ENCODE measurements at regions of chr7 and their contacts with region 1.

Region 1: DNA sequence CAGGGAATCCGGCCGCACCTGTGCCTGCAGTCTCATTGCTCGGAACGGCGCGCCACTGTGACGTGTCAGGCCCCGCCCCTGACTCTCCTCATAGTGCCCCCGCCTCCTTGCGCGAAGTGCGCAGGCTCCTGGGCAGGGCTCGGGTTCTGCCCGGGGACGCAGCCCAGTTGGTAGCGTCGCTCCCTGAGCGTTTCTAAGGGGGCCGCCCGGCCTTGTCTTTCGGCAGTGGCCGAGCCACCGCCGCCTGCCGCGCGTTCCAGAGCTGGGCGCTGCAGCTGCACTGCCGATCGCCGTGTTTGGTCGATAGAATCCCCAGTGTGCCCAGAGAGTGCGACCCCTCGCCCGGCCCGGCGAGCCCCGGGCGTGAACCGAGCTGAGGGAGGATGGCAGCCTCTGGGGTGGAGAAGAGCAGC is at the start of gene KLHL7:
- DNase-seq: peak; percentile 79 to 99
- H3K4me3 ChIP-seq: peak within 1 kb of the TSS; percentile 93 to 97 (median 94)
- H3K27ac ChIP-seq: peak within 1 kb of the TSS; percentile 74
- H3K4me1 ChIP-seq: peaks cover 0 to 5% (median 3%) of the 10 kb centered on the region in 4 experiments; a peak in 3 of 7 replicates
- H3K27me3 ChIP-seq: no peaks in the 10 kb centered on the region
- CTCF ChIP-seq: no peak
- EP300 ChIP-seq: peak in 1 of 2 experiments; percentile 20; a peak in 1 of 3 replicates
- POLR2A ChIP-seq: peak; percentile 72 to 88
- RAD21 ChIP-seq: no peak
- total RNA-seq, gene KLHL7: 111 and 115 TPM in 2 replicates

Region 2: DNA sequence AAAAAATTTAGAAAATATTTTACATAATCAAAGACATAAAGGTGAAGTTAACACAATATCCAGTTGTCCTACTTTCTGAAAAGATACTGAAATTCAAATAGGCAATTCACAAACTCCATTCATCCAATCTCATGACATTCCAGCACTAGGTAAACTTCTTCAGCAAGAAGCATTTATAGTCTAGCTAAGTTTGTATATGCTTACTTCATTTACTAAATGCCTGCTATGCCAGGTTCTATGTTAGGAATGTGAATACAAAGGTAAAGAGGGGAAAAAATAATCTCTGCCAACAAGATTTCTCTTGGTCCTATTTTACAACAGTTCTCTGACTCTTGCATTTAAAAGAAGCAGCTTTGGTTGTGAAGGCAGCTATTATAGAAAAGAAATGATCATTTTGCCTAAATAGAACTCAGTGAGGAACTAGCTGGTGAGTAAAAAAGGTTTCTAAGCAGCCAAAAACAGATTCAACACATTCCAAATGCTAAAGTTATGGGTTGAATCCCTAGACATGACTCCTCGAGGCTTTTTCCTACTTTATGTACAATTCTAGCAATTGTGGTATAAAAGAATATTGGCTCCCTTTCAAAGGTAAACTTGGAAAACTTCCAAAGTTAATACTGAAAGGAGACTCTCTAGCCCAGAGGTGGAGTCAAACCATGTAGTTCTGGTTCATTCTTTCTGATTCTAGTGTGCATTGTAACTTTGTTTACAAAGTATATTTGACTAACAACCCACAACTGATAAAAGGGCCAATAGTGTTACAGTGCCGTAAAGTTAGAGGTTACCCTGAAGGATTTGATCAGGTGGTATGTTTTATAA is 31.0 kb before region 1 on chr7:
- CTCF ChIA-PET with region 1: interaction called, 19 read pairs
- POLR2A ChIA-PET with region 1: no interaction called
- DNase-seq: no peak
- H3K4me3 ChIP-seq: no peak overlapping the region
- H3K27ac ChIP-seq: no peak overlapping the region
- H3K4me1 ChIP-seq: no peaks in the 10 kb centered on the region
- H3K27me3 ChIP-seq: no peaks in the 10 kb centered on the region
- CTCF ChIP-seq: no peak
- EP300 ChIP-seq: no peak
- POLR2A ChIP-seq: no peak
- RAD21 ChIP-seq: no peak

Region 3: DNA sequence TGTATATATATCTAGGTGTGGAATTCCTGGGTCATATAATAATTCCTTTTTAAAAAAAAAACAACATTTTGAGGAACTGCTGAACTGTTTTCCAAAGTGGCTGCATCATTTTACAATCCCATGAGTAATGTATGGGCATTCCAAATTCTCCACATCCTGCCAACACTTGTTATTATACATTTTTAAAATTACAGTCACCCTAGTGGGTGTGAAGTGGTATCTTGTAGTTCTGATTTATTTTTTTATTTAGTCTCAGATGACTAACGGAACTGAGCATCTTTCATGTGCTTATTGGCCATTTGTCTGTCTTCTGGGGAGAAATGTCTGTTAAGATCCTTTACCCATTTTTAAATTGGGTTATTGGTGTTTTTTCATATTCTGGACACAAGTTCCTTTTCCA is 12.1 kb before region 1 on chr7:
- CTCF ChIA-PET with region 1: interaction called, 102 read pairs
- POLR2A ChIA-PET with region 1: interaction called, 5 read pairs
- DNase-seq: no peak
- H3K4me3 ChIP-seq: no peak overlapping the region
- H3K27ac ChIP-seq: no peak overlapping the region
- H3K4me1 ChIP-seq: no peaks in the 10 kb centered on the region
- H3K27me3 ChIP-seq: no peaks in the 10 kb centered on the region
- CTCF ChIP-seq: no peak
- EP300 ChIP-seq: no peak
- POLR2A ChIP-seq: no peak
- RAD21 ChIP-seq: no peak

Region 4: DNA sequence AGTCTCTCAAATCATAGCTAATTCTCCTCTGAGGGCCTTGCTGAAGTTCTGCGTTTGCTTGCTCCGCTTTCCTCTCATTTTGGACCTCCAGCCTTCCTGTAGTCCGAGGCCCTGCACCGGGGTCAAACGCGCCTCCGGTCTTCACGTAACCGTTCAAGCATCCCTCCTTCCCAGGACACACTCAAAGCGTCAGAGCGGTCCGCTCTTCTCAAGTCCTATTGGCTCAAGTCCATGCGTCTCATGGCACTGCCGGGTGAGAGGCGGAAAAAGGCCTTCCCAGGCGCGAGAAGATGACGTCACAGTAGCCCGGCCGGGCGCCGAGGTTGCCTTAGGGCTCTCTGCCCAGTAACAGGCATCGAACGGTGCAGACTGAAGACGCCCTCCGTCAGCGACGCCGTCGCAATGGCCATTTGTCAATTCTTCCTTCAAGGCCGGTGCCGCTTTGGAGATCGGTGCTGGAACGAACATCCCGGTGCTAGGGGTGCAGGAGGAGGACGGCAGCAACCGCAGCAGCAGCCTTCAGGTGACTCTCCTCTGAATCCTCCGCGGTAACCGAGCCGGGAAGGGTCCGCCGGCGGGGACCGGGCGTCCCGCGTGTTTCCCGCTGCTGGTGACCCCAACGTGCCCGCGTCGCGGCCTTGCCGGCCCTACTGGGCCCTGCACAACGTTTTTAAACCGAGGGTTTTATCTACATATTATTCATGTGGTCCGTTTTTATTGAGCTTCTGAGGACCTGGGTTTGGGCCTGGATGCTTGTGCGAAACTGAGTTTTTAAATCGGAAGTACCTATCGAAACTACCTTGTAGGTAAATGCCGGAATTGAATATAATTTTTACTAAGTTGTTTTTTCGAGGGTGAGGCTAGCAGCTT is 76.3 kb after region 1 on chr7 and contains the start of gene NUP42:
- CTCF ChIA-PET with region 1: interaction called, 5 read pairs
- POLR2A ChIA-PET with region 1: interaction called, 12 read pairs
- DNase-seq: peak; percentile 98 to 99
- H3K4me3 ChIP-seq: peak within 1 kb of the TSS; percentile 69 to 96 (median 84)
- H3K27ac ChIP-seq: peak within 1 kb of the TSS; percentile 88
- H3K4me1 ChIP-seq: peaks cover 0 to 3% (median under 1%) of the 10 kb centered on the region in 4 experiments; a peak in 2 of 7 replicates
- H3K27me3 ChIP-seq: no peaks in the 10 kb centered on the region
- CTCF ChIP-seq: no peak
- EP300 ChIP-seq: no peak
- POLR2A ChIP-seq: peak; percentile 72 to 91
- RAD21 ChIP-seq: no peak
- total RNA-seq, gene NUP42: 27.8 and 31.8 TPM in 2 replicates

Measured in H1 (cell line).